Calu3 (cell line): ENCODE measurements at regions of chr5 and their contacts with region 1.

Region 1: DNA sequence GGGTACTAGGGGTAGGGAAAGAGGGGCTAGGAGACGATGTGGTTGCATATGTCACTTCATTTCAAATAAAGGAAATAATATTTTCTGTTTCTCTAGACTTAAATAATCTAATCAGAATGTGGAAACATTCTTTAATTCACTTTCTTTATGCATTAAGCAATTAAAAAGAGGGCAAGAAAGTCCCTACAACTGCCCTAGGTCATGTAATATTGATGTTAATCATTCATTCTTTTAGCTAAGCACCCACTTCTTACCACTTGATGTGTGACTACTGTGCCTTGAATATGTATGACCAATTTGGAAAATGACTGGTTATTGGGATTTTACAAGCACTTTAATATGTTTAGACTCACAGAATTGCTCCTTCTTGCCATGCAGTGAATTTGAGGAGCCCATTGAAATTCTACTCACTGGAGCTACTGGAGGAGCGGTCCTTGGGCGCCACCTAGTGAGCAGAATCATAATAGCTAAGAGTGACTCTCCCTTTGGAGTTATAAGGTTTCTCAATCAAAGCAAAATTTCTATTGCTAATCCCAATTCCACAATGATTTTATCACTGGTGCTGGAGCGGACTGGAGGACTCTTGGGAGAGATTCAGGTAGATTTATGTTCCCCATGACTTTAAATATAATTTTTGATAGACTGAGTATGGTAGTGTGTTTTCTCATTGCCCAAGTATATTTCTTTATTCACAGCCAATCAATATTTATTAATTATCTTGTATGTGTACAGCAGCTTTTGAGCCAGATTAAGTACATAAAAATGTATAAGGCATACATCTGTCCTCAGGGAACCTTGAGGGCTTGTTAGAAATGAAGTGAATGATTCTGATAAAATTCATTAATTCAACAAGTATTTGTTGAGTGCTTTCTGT is 225.1 kb downstream of the ADGRV1 start:
- DNase-seq: peak; percentile 86
- H3K4me3 Mint-ChIP-seq: no peak overlapping the region
- H3K27ac Mint-ChIP-seq: no peak overlapping the region
- H3K4me1 Mint-ChIP-seq: no peaks in the 10 kb centered on the region
- H3K27me3 Mint-ChIP-seq: no peaks in the 10 kb centered on the region
- CTCF ChIP-seq: peak; percentile 93

Region 2: GRCh38 chr5:90434116-90434714 is 349.5 kb before region 1 on chr5:
- CTCF ChIA-PET with region 1: interaction called, 5 read pairs
- intact Hi-C with region 1: loop called (anchors 1 kb)
- DNase-seq: peak; percentile 76
- H3K4me3 Mint-ChIP-seq: no peak overlapping the region
- H3K27ac Mint-ChIP-seq: no peak overlapping the region
- H3K4me1 Mint-ChIP-seq: peaks cover 12% of the 10 kb centered on the region
- H3K27me3 Mint-ChIP-seq: peaks cover 25% of the 10 kb centered on the region
- CTCF ChIP-seq: peak; percentile 71

Region 3: GRCh38 chr5:90606539-90606938 is 177.2 kb before region 1 on chr5:
- CTCF ChIA-PET with region 1: interaction called, 4 read pairs
- intact Hi-C with region 1: loop called (anchors 1 kb)
- DNase-seq: peak; percentile 7
- H3K4me3 Mint-ChIP-seq: no peak overlapping the region
- H3K27ac Mint-ChIP-seq: no peak overlapping the region
- H3K4me1 Mint-ChIP-seq: peaks cover 10% of the 10 kb centered on the region
- H3K27me3 Mint-ChIP-seq: peaks cover 49% of the 10 kb centered on the region
- CTCF ChIP-seq: peak; percentile 50

Region 4: GRCh38 chr5:90709323-90710155 is 74.2 kb before region 1 on chr5:
- CTCF ChIA-PET with region 1: interaction called, 21 read pairs
- intact Hi-C with region 1: loop called (anchors 1 kb)
- DNase-seq: peak; percentile 71
- H3K4me3 Mint-ChIP-seq: no peak overlapping the region
- H3K27ac Mint-ChIP-seq: no peak overlapping the region
- H3K4me1 Mint-ChIP-seq: no peaks in the 10 kb centered on the region
- H3K27me3 Mint-ChIP-seq: no peaks in the 10 kb centered on the region
- CTCF ChIP-seq: peak; percentile 57